ENCODE measurements at regions of chr3 and their contacts with region 1.

Region 1: DNA sequence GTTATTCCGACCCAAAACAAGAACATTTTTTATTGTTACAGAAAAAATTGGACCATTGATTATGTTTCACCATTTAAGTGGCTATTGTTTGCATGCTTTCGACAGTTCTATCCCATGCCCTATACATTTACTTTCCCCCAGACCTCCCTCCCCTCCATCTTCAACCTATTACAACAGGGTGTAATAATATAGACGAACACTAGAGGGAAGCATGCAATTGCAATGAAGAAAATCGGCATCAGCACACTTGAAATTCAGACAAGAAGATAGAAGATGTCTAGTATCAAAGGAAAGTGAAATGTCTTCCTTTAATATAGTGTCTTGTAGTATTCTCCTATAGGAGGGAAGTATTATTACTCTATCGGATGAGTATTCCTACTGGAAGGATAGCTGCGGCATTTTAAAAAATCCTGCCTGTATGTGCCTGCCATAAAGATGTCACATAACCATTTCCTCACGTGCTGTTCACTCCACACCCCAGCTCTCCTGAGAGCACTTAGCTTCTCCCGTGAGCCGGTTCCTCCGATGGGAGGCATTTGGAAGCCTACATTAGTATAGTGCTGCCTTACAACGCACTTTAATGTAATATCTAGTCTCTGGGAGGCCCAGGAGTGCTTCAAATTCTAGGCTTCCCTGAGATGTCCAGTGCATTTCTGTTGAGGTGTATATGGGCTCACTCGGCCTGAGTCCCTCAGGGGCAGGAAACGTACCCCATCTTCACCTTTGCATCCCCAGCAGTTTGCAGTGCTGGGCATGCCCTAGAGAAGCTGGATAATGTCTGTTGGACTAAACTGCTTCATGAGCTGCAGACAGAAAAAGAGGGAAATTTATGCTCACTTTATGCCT is 17.8 kb upstream of the ERICH6 start:
- DNase-seq: no peak
- H3K4me3 ChIP-seq: no peak overlapping the region
- H3K27ac ChIP-seq: no peak overlapping the region
- H3K4me1 ChIP-seq: no peaks in the 10 kb centered on the region
- H3K27me3 ChIP-seq: no peaks in the 10 kb centered on the region
- CTCF ChIP-seq: peak in 2 of 3 experiments; percentile 51 to 69; a peak in 2 of 4 replicates
- EP300 ChIP-seq: no peak
- POLR2A ChIP-seq: no peak
- RAD21 ChIP-seq: peak; percentile 88 to 92

Region 2: DNA sequence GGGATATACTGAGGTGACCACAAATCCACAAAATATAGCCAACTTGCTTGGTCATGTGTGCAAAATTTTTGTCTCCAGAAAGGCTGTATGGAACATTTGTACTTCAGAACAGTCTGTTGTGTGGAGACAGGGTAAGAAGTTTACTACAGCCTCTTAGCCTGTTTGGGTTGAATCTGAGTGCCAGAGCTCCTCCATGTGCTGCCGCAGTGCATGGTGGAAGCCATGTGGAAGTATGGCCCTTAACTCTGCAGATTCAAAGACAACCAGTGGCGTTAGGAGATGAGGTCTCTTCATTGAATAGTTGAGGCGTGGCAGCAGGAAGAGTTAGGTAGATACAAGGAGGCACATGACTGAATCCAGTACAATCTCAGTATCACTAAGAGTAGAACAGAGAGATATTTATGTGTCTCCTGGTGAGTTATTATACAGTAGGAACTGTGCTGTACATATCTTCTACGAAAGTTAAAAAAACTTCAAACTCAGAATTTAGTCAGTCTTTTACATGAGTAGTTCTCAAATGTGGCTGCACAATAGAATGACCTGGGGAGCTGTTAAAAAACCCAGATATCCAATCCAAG is 165.6 kb before region 1 on chr3:
- CTCF ChIA-PET with region 1: no interaction called
- POLR2A ChIA-PET with region 1: no interaction called
- DNase-seq: no peak
- H3K4me3 ChIP-seq: no peak overlapping the region
- H3K27ac ChIP-seq: no peak overlapping the region
- H3K4me1 ChIP-seq: no peaks in the 10 kb centered on the region
- H3K27me3 ChIP-seq: no peaks in the 10 kb centered on the region
- CTCF ChIP-seq: no peak
- EP300 ChIP-seq: no peak
- POLR2A ChIP-seq: no peak
- RAD21 ChIP-seq: no peak

Region 3: GRCh38 chr3:150623945-150624344 is 97.6 kb before region 1 on chr3:
- CTCF ChIA-PET with region 1: no interaction called
- POLR2A ChIA-PET with region 1: no interaction called
- DNase-seq: no peak
- H3K4me3 ChIP-seq: no peak overlapping the region
- H3K27ac ChIP-seq: no peak overlapping the region
- H3K4me1 ChIP-seq: no peaks in the 10 kb centered on the region; a peak in 1 of 7 replicates
- H3K27me3 ChIP-seq: no peaks in the 10 kb centered on the region
- CTCF ChIP-seq: no peak
- EP300 ChIP-seq: no peak
- POLR2A ChIP-seq: no peak
- RAD21 ChIP-seq: no peak

Region 4: GRCh38 chr3:150710097-150710496 is 11.4 kb before region 1 on chr3:
- CTCF ChIA-PET with region 1: interaction called, 36 read pairs
- POLR2A ChIA-PET with region 1: interaction called, 3 read pairs
- DNase-seq: no peak
- H3K4me3 ChIP-seq: no peak overlapping the region
- H3K27ac ChIP-seq: no peak overlapping the region
- H3K4me1 ChIP-seq: no peaks in the 10 kb centered on the region
- H3K27me3 ChIP-seq: no peaks in the 10 kb centered on the region
- CTCF ChIP-seq: no peak
- EP300 ChIP-seq: no peak
- POLR2A ChIP-seq: no peak
- RAD21 ChIP-seq: no peak

Region 5: DNA sequence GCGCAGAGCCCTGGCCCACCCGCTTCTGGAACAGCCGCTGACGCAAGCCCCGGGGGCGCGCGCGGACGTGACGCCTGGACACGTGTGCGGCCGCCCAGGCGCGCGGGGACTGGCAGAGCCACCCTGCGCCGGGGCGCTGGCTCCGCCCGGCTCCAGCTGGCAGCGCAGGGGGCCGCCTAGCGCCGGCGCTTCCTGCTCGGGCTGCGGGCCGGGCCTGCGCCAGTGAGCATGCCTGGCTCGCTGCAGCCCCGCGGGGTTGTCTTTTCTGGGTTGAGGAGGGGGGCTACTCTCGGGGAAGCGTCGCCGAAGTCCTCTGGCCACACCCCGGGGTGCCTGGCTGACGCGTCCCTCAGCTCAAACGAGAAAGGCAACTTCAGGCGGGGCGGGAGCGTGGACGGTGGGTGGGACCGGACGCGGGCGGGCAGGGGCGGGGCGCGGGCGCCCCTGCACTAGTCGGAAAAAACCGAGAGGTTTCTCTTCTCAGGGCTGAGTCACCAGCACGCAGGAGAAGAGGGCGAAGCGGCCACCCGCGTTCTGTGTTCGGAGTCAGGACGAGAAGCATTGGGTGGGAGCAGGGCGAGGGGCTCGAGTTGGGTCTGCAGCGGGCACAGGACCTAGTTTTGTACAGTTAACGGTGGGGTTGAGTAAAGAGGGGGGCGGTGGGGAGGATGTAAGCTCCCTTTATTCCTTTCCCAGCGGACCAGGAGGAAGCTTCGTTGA is 41.8 kb after region 1 on chr3 and contains the start of gene SIAH2:
- CTCF ChIA-PET with region 1: interaction called, 23 read pairs
- POLR2A ChIA-PET with region 1: interaction called, 3 read pairs
- DNase-seq: peak in 1 of 2 experiments; percentile 81
- H3K4me3 ChIP-seq: peak within 1 kb of the TSS; percentile 64 to 79 (median 76)
- H3K27ac ChIP-seq: no peak within 1 kb of the TSS
- H3K4me1 ChIP-seq: peaks cover 5 to 12% (median 10%) of the 10 kb centered on the region in 4 experiments; a peak in 5 of 7 replicates
- H3K27me3 ChIP-seq: peaks cover 0 to 7% (median 3%) of the 10 kb centered on the region in 4 experiments; a peak in 4 of 7 replicates
- CTCF ChIP-seq: 0 out of 4 replicates have a peak, but pooled peaks of 1 of the 3 experiments have one; percentile 11
- EP300 ChIP-seq: peak in 1 of 2 experiments; percentile 44; a peak in 1 of 3 replicates
- POLR2A ChIP-seq: no peak
- RAD21 ChIP-seq: no peak
- total RNA-seq, gene SIAH2: 21.8 and 23.9 TPM in 2 replicates

Region 6: GRCh38 chr3:150775091-150775501 is 53.6 kb after region 1 on chr3:
- CTCF ChIA-PET with region 1: interaction called, 24 read pairs
- POLR2A ChIA-PET with region 1: no interaction called
- DNase-seq: no peak
- H3K4me3 ChIP-seq: no peak overlapping the region
- H3K27ac ChIP-seq: no peak overlapping the region
- H3K4me1 ChIP-seq: no peaks in the 10 kb centered on the region
- H3K27me3 ChIP-seq: no peaks in the 10 kb centered on the region
- CTCF ChIP-seq: no peak
- EP300 ChIP-seq: no peak
- POLR2A ChIP-seq: no peak
- RAD21 ChIP-seq: no peak

Region 7: GRCh38 chr3:151538456-151539393 is 817.2 kb after region 1 on chr3:
- CTCF ChIA-PET with region 1: no interaction called
- POLR2A ChIA-PET with region 1: no interaction called
- DNase-seq: no peak
- H3K4me3 ChIP-seq: no peak overlapping the region
- H3K27ac ChIP-seq: no peak overlapping the region
- H3K4me1 ChIP-seq: peaks cover 0 to 12% (median 3%) of the 10 kb centered on the region in 4 experiments; a peak in 3 of 7 replicates
- H3K27me3 ChIP-seq: no peaks in the 10 kb centered on the region
- CTCF ChIP-seq: no peak
- EP300 ChIP-seq: no peak
- POLR2A ChIP-seq: no peak
- RAD21 ChIP-seq: no peak

Measured in H1 (cell line).